Activated CD4-positive, alpha-beta T cell treated with anti-CD3 and anti-CD28 coated beads for 36 hours (primary cell): ENCODE measurements at regions of chr16 and their contacts with region 1.

Region 1: DNA sequence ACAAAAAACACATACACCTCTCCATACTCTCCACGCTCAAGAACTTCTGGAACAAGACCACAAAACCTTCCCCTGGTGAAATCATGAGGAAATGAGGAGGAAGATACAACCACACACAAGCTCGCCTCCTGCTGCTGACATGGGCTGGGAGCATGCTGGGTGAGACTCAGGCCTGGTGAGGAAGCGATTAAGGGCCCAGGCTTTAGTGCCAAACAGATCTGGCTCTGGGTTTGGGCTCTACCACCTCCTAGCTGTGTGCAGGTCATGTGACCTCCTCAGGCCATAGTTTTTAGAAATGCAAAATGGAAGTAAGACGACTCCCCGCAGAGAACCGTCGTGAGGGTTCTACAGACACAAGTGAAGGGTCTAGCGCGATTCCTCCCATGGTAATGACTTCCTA is 41.3 kb downstream of the VAC14 start:
- DNase-seq: no peak
- ATAC-seq: no peak
- H3K4me3 Mint-ChIP-seq: no peak overlapping the region
- H3K27ac Mint-ChIP-seq: no peak overlapping the region
- H3K4me1 Mint-ChIP-seq: peaks cover 9% of the 10 kb centered on the region
- H3K27me3 Mint-ChIP-seq: no peaks in the 10 kb centered on the region

Region 2: DNA sequence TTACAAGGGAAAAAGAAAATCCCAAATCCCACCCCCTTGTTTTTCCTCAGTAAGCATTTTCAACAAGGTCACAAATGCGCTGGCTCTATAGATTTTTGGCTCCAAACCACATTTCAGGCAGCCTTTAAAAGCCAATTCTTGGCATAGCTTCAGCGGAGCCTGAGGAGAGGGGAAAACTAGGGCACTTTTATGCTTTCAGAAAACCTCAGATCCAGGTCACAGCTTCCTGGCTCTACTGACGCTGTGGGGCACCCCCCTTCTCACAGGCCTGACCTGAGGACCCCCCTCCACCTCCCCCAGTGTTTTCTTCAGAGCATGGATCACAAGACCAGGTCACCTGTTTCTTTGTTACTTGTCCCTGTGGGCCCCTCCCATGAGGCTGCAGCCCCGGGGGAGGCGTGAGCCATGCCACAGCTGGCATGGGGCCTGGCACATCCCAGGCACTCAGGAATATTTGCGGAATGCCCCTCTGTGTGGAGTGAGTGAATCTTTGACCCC is 43.8 kb before region 1 on chr16:
- CTCF ChIA-PET with region 1: no interaction called
- POLR2A ChIA-PET with region 1: no interaction called
- intact Hi-C with region 1: loop called in 1 of 2 experiments (anchors 1 kb)
- DNase-seq: no peak
- ATAC-seq: no peak
- H3K4me3 Mint-ChIP-seq: no peak overlapping the region
- H3K27ac Mint-ChIP-seq: no peak overlapping the region
- H3K4me1 Mint-ChIP-seq: peaks cover 8% of the 10 kb centered on the region
- H3K27me3 Mint-ChIP-seq: no peaks in the 10 kb centered on the region